GM23248 (cell line): ENCODE measurements at regions of chr9 and their contacts with region 1.

Region 1: DNA sequence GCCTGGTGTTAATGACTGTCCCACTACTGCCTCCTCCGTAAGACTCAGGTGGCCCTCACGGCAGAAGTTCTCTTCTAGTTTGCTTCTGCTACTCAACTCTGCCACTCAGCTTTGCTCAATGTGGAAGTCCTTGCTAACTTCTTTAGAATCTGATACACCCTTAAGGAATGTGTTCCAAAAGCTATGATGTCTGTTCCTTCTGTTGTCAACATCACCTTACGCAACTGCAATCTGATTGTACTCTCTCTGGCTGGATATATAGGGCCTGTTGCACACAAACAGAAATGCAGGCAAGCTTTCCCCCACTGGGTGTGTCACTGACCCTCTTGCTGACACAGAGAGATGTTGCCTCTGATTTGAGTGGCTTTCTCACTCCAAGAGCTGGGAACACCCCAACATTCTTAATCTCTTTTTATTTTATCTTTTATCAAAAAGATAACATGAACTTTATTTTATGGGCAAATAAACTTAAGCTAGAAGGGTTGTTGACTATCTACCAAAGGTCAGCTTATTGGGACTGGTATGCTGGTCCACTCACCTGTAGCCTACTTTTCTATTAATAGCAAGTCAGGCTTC is 25.3 kb downstream of the TMEM252 start:
- DNase-seq: peak; percentile 43
- H3K4me3 ChIP-seq: no peak overlapping the region
- H3K27ac ChIP-seq: no peak overlapping the region
- H3K4me1 ChIP-seq: no peaks in the 10 kb centered on the region
- H3K27me3 ChIP-seq: no peaks in the 10 kb centered on the region

Region 2: GRCh38 chr9:68577774-68578591 is 62.6 kb after region 1 on chr9:
- in situ Hi-C with region 1: loop called (anchors 10 kb)
- DNase-seq: no peak
- H3K4me3 ChIP-seq: no peak overlapping the region
- H3K27ac ChIP-seq: no peak overlapping the region
- H3K4me1 ChIP-seq: no peaks in the 10 kb centered on the region
- H3K27me3 ChIP-seq: peaks cover 6% of the 10 kb centered on the region; the same call in 1 of the 2 replicates

Region 3: DNA sequence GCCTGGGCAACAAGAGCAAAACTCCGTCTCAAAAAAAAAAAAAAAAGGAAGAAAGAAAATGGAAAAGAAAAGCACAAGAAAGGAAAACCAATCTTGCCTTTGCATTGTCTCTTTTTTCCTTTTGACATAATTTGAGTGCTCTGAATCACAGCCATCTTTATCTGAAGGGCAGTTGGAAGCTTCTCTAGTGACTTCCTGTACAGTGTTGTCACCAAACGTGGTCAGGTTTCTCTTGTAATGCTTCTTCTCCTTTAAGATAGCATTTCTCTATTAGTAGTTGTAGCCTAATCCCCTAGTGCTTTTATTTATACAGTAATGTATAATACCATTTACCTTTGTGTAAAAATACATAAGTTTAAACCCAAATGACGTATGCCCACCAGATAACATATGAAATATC is 480.4 kb after region 1 on chr9:
- in situ Hi-C with region 1: no loop called
- DNase-seq: no peak
- H3K4me3 ChIP-seq: no peak overlapping the region
- H3K27ac ChIP-seq: no peak overlapping the region
- H3K4me1 ChIP-seq: no peaks in the 10 kb centered on the region
- H3K27me3 ChIP-seq: peaks cover 13% of the 10 kb centered on the region

Region 4: DNA sequence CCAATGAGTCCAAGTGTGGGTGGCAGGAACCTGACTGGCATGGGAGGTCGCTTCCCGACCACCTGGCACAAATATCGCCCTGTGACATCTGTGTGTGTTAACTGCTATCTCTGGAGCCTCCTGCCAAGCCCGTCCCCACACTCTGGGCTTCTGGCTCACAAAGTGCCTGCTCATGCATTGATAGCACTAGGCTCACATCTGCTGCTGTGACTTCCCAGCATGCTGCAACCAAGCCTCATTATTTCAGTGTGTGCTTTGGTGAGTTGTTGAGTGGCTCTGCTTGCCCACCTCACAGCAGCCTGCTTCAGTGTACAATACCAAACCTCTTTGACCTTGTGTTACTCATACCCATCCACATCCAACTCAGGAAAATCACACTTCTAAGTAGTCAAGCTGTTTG is 1017.0 kb after region 1 on chr9:
- in situ Hi-C with region 1: no loop called
- DNase-seq: no peak
- H3K4me3 ChIP-seq: no peak overlapping the region
- H3K27ac ChIP-seq: no peak overlapping the region
- H3K4me1 ChIP-seq: peaks cover 16% of the 10 kb centered on the region
- H3K27me3 ChIP-seq: no peaks in the 10 kb centered on the region